ENCODE measurements at regions of chr10 and their contacts with region 1.

Region 1: DNA sequence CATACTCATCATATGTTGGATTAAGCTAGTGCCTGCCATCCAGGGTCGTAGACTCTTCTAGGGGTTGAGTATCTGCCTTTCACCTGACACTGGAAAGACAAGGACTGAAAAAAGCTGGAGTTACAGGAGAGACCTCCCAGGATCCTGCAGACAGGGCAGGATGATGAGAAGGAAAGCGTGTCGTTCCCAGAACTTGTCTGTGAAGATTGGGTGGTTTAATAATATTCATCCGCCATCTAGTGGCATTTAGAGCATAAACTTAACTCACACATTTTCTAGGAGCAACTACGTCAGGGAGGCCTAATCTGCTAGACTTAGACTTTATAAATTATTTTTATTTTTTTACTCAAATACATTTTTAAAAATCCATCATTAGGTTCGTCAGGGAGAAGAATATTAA is 59.6 kb downstream of the ADRB1 start:
- DNase-seq: peak in 1 of 2 donors; percentile 85
- H3K4me3 ChIP-seq: no peak overlapping the region
- H3K27ac ChIP-seq: no peak overlapping the region
- H3K4me1 ChIP-seq: peaks cover 10 to 32% (median 18%) of the 10 kb centered on the region in 4 donors
- H3K27me3 ChIP-seq: peaks cover 0 to 10% (median 0%) of the 10 kb centered on the region in 3 donors
- CTCF ChIP-seq: peak in 5 of 7 experiments; percentile 29 to 55 (median 48)
- EP300 ChIP-seq: no peak
- POLR2A ChIP-seq: no peak

Region 2: GRCh38 chr10:113802997-113803396 is 300.3 kb before region 1 on chr10:
- intact Hi-C with region 1: loop called (anchors 5 kb)
- DNase-seq: peak in 1 of 2 donors; percentile 24
- H3K4me3 ChIP-seq: no peak overlapping the region
- H3K27ac ChIP-seq: peak overlapping the region in 1 of 5 donors; percentile 18
- H3K4me1 ChIP-seq: peaks cover 0 to 23% (median 11%) of the 10 kb centered on the region in 4 donors
- H3K27me3 ChIP-seq: no peaks in the 10 kb centered on the region
- CTCF ChIP-seq: no peak
- EP300 ChIP-seq: no peak
- POLR2A ChIP-seq: no peak